ENCODE measurements at regions of chr18 and their contacts with region 1.

Region 1: GRCh38 chr18:27713738-27714095 is 463.2 kb downstream of the CDH2 start:
- DNase-seq: no peak
- ATAC-seq: no peak

Region 2: GRCh38 chr18:27616324-27616723 is 97.4 kb before region 1 on chr18:
- intact Hi-C with region 1: loop called (anchors 10 kb)
- DNase-seq: no peak
- ATAC-seq: no peak

Region 3: GRCh38 chr18:27656167-27656778 is 57.4 kb before region 1 on chr18:
- intact Hi-C with region 1: loop called (anchors 5 kb)
- DNase-seq: no peak
- ATAC-seq: no peak

Region 4: GRCh38 chr18:27808683-27809082 is 95.0 kb after region 1 on chr18:
- intact Hi-C with region 1: no loop called
- DNase-seq: no peak
- ATAC-seq: no peak